Activated CD4-positive, alpha-beta T cell treated with anti-CD3 and anti-CD28 coated beads for 36 hours (primary cell): ENCODE measurements at regions of chr16 and their contacts with region 1.

Region 1: GRCh38 chr16:15643048-15643945 is at the start of gene MARF1:
- DNase-seq: peak; percentile 100
- ATAC-seq: peak; percentile 70
- H3K4me3 Mint-ChIP-seq: peak within 1 kb of the TSS; percentile 84
- H3K27ac Mint-ChIP-seq: peak within 1 kb of the TSS; percentile 98
- H3K4me1 Mint-ChIP-seq: peaks cover 52% of the 10 kb centered on the region
- H3K27me3 Mint-ChIP-seq: no peaks in the 10 kb centered on the region
- total RNA-seq, gene MARF1: 50.2 to 72.5 TPM

Region 2: GRCh38 chr16:15055141-15056053 is 587.9 kb before region 1 on chr16:
- CTCF ChIA-PET with region 1: no interaction called
- POLR2A ChIA-PET with region 1: no interaction called
- intact Hi-C with region 1: loop called in 1 of 2 experiments (anchors 10 kb)
- DNase-seq: peak; percentile 73
- ATAC-seq: peak; percentile 51
- H3K4me3 Mint-ChIP-seq: peak overlapping the region; percentile 82
- H3K27ac Mint-ChIP-seq: peak overlapping the region; percentile 72
- H3K4me1 Mint-ChIP-seq: peaks cover 19% of the 10 kb centered on the region
- H3K27me3 Mint-ChIP-seq: no peaks in the 10 kb centered on the region

Region 3: GRCh38 chr16:15434425-15435215 is 208.7 kb before region 1 on chr16 and contains the start of gene BMERB1:
- CTCF ChIA-PET with region 1: no interaction called
- POLR2A ChIA-PET with region 1: no interaction called
- intact Hi-C with region 1: loop called in 1 of 2 experiments (anchors 2 kb)
- DNase-seq: peak; percentile 79
- ATAC-seq: peak; percentile 92
- H3K4me3 Mint-ChIP-seq: peak within 1 kb of the TSS; percentile 82
- H3K27ac Mint-ChIP-seq: no peak within 1 kb of the TSS
- H3K4me1 Mint-ChIP-seq: peaks cover 11% of the 10 kb centered on the region
- H3K27me3 Mint-ChIP-seq: peaks cover 20% of the 10 kb centered on the region
- total RNA-seq, gene BMERB1: 10.1 to 11.6 TPM

Region 4: GRCh38 chr16:15523092-15523541 is 120.2 kb before region 1 on chr16:
- CTCF ChIA-PET with region 1: no interaction called
- POLR2A ChIA-PET with region 1: no interaction called
- intact Hi-C with region 1: no loop called
- DNase-seq: peak; percentile 8
- ATAC-seq: no peak
- H3K4me3 Mint-ChIP-seq: no peak overlapping the region
- H3K27ac Mint-ChIP-seq: no peak overlapping the region
- H3K4me1 Mint-ChIP-seq: peaks cover 4% of the 10 kb centered on the region
- H3K27me3 Mint-ChIP-seq: no peaks in the 10 kb centered on the region

Region 5: DNA sequence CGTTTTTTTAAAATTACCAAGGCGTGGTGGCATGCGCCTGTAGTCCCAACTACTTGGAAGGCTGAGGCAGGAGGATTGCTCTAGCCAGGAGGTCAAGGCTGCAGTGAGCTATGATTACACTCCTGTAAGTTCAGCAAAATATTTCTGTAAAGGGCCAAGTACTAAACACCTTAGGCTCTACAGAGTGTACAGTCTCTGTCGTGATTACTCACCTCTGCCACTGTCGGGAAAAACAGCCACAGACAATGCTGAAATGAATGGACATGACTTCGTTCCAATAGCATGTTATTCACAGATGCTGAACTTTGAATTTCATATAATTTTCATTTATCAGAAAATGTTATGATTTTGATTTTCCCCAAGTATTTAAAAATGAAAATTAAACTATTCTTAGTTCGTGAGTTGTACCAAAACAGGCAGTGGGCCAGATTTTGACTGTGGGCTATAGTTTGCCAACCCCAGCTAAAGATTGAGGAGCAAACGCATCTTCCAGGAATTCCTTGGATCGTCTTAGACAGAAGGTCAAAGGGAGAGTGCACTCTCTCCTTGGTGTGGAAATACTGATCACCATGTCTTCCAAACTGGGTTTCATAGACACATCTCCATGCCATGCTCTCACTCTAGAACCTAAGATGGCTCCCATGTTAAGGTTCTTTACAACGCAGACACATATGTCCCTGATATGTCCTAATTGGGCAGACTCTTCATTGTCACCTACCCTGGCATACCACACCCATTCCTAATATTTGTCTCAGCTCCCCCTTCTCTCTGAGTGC is 89.8 kb before region 1 on chr16:
- CTCF ChIA-PET with region 1: no interaction called
- POLR2A ChIA-PET with region 1: no interaction called
- intact Hi-C with region 1: loop called in 1 of 2 experiments (anchors 2 kb)
- DNase-seq: peak; percentile 72
- ATAC-seq: peak; percentile 81
- H3K4me3 Mint-ChIP-seq: no peak overlapping the region
- H3K27ac Mint-ChIP-seq: peak overlapping the region; percentile 5
- H3K4me1 Mint-ChIP-seq: peaks cover 28% of the 10 kb centered on the region
- H3K27me3 Mint-ChIP-seq: no peaks in the 10 kb centered on the region

Region 6: DNA sequence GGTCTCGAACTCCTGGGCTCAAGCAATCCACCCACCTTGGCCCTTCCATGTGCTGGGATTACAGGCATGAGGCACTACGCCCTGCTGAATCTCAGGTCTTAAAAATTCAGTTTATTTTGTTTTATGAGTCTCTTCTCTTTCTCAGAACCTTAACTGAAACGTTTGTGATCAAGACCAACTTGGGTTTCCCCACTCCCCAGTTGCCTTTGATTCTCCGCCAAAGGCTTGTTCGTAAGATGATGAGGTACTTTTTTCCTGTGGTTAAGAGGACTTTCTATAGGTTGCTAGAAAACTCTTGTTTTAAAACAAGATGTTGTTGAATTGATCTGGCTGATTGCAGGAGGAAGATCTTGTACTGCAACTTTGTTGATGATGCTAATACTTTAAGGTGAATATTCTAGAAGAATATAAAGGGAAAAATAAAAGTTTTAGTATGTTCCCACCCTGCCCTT is 317.8 kb after region 1 on chr16:
- CTCF ChIA-PET with region 1: no interaction called
- POLR2A ChIA-PET with region 1: no interaction called
- intact Hi-C with region 1: loop called in 1 of 2 experiments (anchors 2 kb)
- DNase-seq: peak; percentile 85
- ATAC-seq: peak; percentile 88
- H3K4me3 Mint-ChIP-seq: peak overlapping the region; percentile 75
- H3K27ac Mint-ChIP-seq: peak overlapping the region; percentile 99
- H3K4me1 Mint-ChIP-seq: peaks cover 81% of the 10 kb centered on the region
- H3K27me3 Mint-ChIP-seq: no peaks in the 10 kb centered on the region